Panc1 (cell line): ENCODE measurements at regions of chr4 and their contacts with region 1.

Region 1: GRCh38 chr4:70901984-70902576 is at the start of gene MOB1B:
- DNase-seq: peak; percentile 27
- ATAC-seq: peak; percentile 98
- H3K4me3 ChIP-seq: peak within 1 kb of the TSS; percentile 70 to 85
- H3K27ac ChIP-seq: peak within 1 kb of the TSS; percentile 81
- H3K4me1 ChIP-seq: no peaks in the 10 kb centered on the region
- H3K27me3 ChIP-seq: no peaks in the 10 kb centered on the region
- CTCF ChIP-seq: peak; percentile 32; the same call in 1 of the 2 replicates
- total RNA-seq, gene MOB1B: 20.1 TPM

Region 2: DNA sequence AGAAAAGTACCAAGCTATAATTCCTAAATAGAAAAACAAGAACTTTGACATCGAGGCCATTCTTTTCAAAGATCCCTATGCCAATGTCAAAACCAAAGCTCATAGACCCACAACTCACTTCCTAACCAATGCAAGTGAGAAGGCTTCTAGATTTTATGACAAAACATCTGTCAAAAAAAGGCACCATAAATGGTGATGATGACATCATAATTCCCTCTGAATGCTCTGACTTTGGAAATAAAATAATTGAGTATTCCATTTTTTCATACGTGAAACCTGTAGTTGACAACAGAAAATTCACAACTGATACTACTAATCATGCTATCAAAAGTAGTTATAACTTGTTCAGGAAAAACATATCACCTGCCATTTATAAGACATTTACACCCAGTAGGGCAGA is 576.0 kb before region 1 on chr4:
- CTCF ChIA-PET with region 1: no interaction called
- POLR2A ChIA-PET with region 1: no interaction called
- in situ Hi-C with region 1: no loop called
- intact Hi-C with region 1: no loop called
- DNase-seq: no peak
- ATAC-seq: no peak
- H3K4me3 ChIP-seq: no peak overlapping the region
- H3K27ac ChIP-seq: no peak overlapping the region
- H3K4me1 ChIP-seq: no peaks in the 10 kb centered on the region
- H3K27me3 ChIP-seq: no peaks in the 10 kb centered on the region
- CTCF ChIP-seq: no peak

Region 3: DNA sequence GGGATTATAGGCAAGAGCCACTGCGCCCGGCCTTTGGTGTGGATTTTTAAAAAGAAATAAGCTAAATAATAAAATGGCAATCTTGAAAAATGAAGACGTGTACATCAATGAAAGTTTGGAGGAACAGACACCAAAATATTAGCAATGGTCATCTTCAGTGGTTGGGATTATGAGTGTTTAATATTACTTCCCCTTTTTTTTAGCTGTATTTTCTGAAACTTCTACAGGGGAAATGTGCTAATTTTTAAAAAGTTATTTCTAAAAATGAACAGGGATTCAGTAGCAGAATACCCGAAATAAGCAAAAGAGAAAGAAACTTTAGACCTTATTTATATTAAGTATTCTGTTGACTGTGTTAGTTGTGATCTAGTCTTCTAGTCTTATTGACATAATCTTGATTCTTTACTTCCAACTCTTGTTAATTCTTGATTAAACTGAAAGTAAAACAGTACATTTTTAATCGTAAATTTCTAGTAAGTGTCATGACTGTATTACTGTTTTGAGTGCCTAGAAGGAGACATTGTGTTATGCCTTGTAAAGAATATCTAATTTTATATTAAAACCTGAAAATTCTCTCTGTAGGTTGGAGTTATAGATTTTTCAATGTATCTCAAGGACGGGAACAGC is 129.0 kb before region 1 on chr4:
- CTCF ChIA-PET with region 1: interaction called, 10 read pairs
- POLR2A ChIA-PET with region 1: no interaction called
- in situ Hi-C with region 1: no loop called
- intact Hi-C with region 1: no loop called
- DNase-seq: no peak
- ATAC-seq: no peak
- H3K4me3 ChIP-seq: no peak overlapping the region
- H3K27ac ChIP-seq: no peak overlapping the region
- H3K4me1 ChIP-seq: no peaks in the 10 kb centered on the region
- H3K27me3 ChIP-seq: no peaks in the 10 kb centered on the region
- CTCF ChIP-seq: no peak

Region 4: GRCh38 chr4:70863099-70863790 is 38.8 kb before region 1 on chr4:
- CTCF ChIA-PET with region 1: interaction called, 13 read pairs
- POLR2A ChIA-PET with region 1: no interaction called
- in situ Hi-C with region 1: no loop called
- intact Hi-C with region 1: no loop called
- DNase-seq: no peak
- ATAC-seq: no peak
- H3K4me3 ChIP-seq: no peak overlapping the region
- H3K27ac ChIP-seq: no peak overlapping the region
- H3K4me1 ChIP-seq: no peaks in the 10 kb centered on the region
- H3K27me3 ChIP-seq: no peaks in the 10 kb centered on the region
- CTCF ChIP-seq: no peak

Region 5: DNA sequence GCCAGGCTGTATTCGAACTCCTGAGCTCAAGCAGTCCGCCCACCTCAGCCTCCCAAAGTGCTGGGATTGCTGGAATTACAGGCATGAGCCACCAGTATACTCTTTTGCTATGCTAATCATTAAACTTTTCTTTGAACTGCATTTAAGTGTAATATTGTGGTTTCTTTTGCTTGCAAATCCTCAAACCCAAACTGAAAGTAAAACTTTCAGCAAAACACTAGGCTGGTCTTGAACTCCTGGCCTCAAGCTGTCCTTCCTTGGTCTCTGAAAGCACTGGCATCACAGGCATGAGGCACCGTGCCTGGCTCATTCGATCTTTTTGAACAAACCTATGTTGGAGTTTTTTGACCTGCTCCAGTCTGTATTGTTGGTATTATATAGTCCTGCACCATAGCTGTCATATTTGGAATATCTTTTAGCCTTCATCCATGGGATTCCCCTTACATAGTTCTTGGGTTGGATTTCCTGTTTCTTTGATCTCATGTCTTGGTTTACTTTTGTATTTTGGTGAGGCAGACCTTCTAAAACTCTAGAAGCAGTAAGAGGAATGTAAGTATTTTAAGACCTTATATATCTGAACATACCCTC is 34.2 kb after region 1 on chr4:
- CTCF ChIA-PET with region 1: no interaction called
- POLR2A ChIA-PET with region 1: no interaction called
- in situ Hi-C with region 1: no loop called
- intact Hi-C with region 1: no loop called
- DNase-seq: no peak
- ATAC-seq: no peak
- H3K4me3 ChIP-seq: no peak overlapping the region
- H3K27ac ChIP-seq: no peak overlapping the region
- H3K4me1 ChIP-seq: no peaks in the 10 kb centered on the region
- H3K27me3 ChIP-seq: no peaks in the 10 kb centered on the region
- CTCF ChIP-seq: no peak

Region 6: DNA sequence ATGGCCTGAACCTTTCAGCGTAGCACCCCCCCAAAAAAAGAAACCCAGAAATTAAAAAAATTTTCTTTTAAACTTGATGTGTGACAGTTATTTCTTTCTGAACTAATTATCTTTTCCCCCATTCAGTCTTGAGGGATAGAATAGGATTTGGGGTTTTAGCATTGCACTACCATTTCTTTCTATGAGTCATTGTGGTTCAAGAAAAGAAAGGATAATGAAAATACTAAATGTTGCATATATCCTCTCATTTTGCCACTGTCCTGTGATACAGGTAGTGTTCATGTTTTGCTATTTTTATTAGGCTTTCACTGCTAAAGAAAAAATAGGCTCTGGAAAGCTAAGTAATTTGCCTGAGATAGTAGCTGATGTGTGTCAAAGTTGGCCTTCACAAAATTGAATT is 52.0 kb after region 1 on chr4:
- CTCF ChIA-PET with region 1: interaction called, 10 read pairs
- POLR2A ChIA-PET with region 1: no interaction called
- in situ Hi-C with region 1: no loop called
- intact Hi-C with region 1: no loop called
- DNase-seq: no peak
- ATAC-seq: no peak
- H3K4me3 ChIP-seq: no peak overlapping the region
- H3K27ac ChIP-seq: no peak overlapping the region
- H3K4me1 ChIP-seq: no peaks in the 10 kb centered on the region
- H3K27me3 ChIP-seq: no peaks in the 10 kb centered on the region
- CTCF ChIP-seq: no peak

Region 7: GRCh38 chr4:71009890-71010588 is 108.0 kb after region 1 on chr4:
- CTCF ChIA-PET with region 1: interaction called, 10 read pairs
- POLR2A ChIA-PET with region 1: no interaction called
- in situ Hi-C with region 1: no loop called
- intact Hi-C with region 1: no loop called
- DNase-seq: peak; percentile 27
- ATAC-seq: no peak
- H3K4me3 ChIP-seq: no peak overlapping the region
- H3K27ac ChIP-seq: no peak overlapping the region
- H3K4me1 ChIP-seq: no peaks in the 10 kb centered on the region
- H3K27me3 ChIP-seq: no peaks in the 10 kb centered on the region
- CTCF ChIP-seq: peak; percentile 60; the same call in 1 of the 2 replicates